ENCODE measurements at regions of chr15 and their contacts with region 1.

Region 1: GRCh38 chr15:90201130-90201949 is at the start of gene SEMA4B:
- DNase-seq: peak; percentile 79
- H3K4me3 Mint-ChIP-seq: peak within 1 kb of the TSS; percentile 73
- H3K27ac Mint-ChIP-seq: peak within 1 kb of the TSS; percentile 66
- H3K4me1 Mint-ChIP-seq: peaks cover 26% of the 10 kb centered on the region
- H3K27me3 Mint-ChIP-seq: peaks cover 5% of the 10 kb centered on the region
- total RNA-seq, gene SEMA4B: 23.4 to 26.7 TPM

Region 2: GRCh38 chr15:90178468-90179435 is 22.6 kb before region 1 on chr15:
- CTCF ChIA-PET with region 1: interaction called, 10 read pairs
- POLR2A ChIA-PET with region 1: no interaction called
- DNase-seq: no peak
- H3K4me3 Mint-ChIP-seq: no peak overlapping the region
- H3K27ac Mint-ChIP-seq: no peak overlapping the region
- H3K4me1 Mint-ChIP-seq: peaks cover 13% of the 10 kb centered on the region
- H3K27me3 Mint-ChIP-seq: peaks cover 14% of the 10 kb centered on the region

Region 3: GRCh38 chr15:90184786-90185569 is 16.4 kb before region 1 on chr15:
- CTCF ChIA-PET with region 1: interaction called, 17 read pairs
- POLR2A ChIA-PET with region 1: no interaction called
- DNase-seq: peak; percentile 72
- H3K4me3 Mint-ChIP-seq: peak overlapping the region; percentile 81
- H3K27ac Mint-ChIP-seq: peak overlapping the region; percentile 80
- H3K4me1 Mint-ChIP-seq: peaks cover 27% of the 10 kb centered on the region
- H3K27me3 Mint-ChIP-seq: peaks cover 4% of the 10 kb centered on the region

Measured in activated CD4-positive, alpha-beta T cell treated with anti-CD3 and anti-CD28 coated beads, Interleukin-2, amount 10 ng/mL, durations not matched to agents 7 days and 5 days (primary cell).